Psoas muscle (tissue), 8 donors: ENCODE measurements at regions of chr4 and their contacts with region 1.

Region 1: GRCh38 chr4:128517739-128518510 is 230.3 kb upstream of the PGRMC2 start:
- DNase-seq: peak; percentile 53 to 58
- ATAC-seq: peak; percentile 80 to 94 (median 86)
- H3K4me3 ChIP-seq: no peak overlapping the region
- H3K27ac ChIP-seq: peak overlapping the region; percentile 72
- H3K4me1 ChIP-seq: peaks cover 27% of the 10 kb centered on the region
- H3K27me3 ChIP-seq: no peaks in the 10 kb centered on the region
- CTCF ChIP-seq: no peak

Region 2: DNA sequence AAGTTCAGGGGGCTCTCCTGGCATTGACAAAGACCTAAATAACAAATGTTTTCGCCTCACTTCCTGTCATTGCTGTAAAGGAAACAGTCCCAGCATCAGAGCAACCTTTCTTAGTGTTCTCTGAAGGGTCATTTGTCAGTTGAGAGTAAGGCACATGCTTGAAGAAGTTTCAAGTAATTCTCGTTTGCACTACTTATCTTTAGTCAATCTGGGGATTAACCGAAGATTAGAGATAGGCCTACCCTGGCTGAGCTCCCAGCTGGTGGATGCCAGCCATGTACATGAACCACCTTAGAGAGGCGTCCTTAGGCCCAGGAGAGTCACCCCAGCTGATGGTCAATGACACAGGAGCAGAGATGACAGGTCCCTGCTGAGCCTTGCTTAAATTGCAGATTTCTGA is 40.4 kb before region 1 on chr4:
- intact Hi-C with region 1: loop called in 1 of 2 experiments (anchors 5 kb)
- DNase-seq: no peak
- ATAC-seq: no peak
- H3K4me3 ChIP-seq: no peak overlapping the region
- H3K27ac ChIP-seq: no peak overlapping the region
- H3K4me1 ChIP-seq: no peaks in the 10 kb centered on the region
- H3K27me3 ChIP-seq: no peaks in the 10 kb centered on the region
- CTCF ChIP-seq: no peak

Region 3: DNA sequence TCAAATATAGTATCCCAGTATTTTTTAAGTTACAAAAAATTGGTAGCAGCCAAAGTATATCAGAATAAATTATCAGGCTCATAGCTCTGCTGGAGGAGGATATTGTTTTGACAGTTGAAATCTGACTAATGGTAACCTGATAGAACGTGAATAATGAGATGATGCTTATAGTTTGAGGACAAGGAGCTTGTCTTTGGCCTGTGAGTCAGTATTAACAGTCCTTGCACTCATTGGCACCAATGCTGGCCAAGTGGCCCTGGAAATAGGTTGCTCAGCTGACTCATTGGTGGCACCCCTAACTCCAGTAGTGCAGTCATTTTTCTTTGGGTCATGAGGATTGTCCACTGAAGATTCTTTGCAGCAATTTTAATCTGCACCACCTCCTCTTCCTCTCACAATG is 88.2 kb after region 1 on chr4:
- intact Hi-C with region 1: no loop called
- DNase-seq: peak; percentile 31 to 77
- ATAC-seq: peak; percentile 89 to 95 (median 94)
- H3K4me3 ChIP-seq: no peak overlapping the region
- H3K27ac ChIP-seq: peak overlapping the region; percentile 52
- H3K4me1 ChIP-seq: peaks cover 25% of the 10 kb centered on the region
- H3K27me3 ChIP-seq: no peaks in the 10 kb centered on the region
- CTCF ChIP-seq: no peak

Region 4: GRCh38 chr4:128718768-128719167 is 200.8 kb after region 1 on chr4:
- intact Hi-C with region 1: no loop called
- DNase-seq: no peak
- ATAC-seq: no peak
- H3K4me3 ChIP-seq: no peak overlapping the region
- H3K27ac ChIP-seq: no peak overlapping the region
- H3K4me1 ChIP-seq: no peaks in the 10 kb centered on the region
- H3K27me3 ChIP-seq: no peaks in the 10 kb centered on the region
- CTCF ChIP-seq: no peak